ENCODE measurements at regions of chr6 and their contacts with region 1.

Region 1: GRCh38 chr6:17971128-17972073 is 16.0 kb downstream of the KIF13A start:
- DNase-seq: peak; percentile 66
- H3K4me3 ChIP-seq: no peak overlapping the region
- H3K27ac ChIP-seq: peak overlapping the region; percentile 44
- H3K4me1 ChIP-seq: peaks cover 50% of the 10 kb centered on the region
- H3K27me3 ChIP-seq: no peaks in the 10 kb centered on the region
- CTCF ChIP-seq: no peak

Region 2: GRCh38 chr6:18022398-18023231 is 51.2 kb after region 1 on chr6:
- CTCF ChIA-PET with region 1: no interaction called
- dilution Hi-C with region 1: loop called (anchors 10 kb)
- in situ Hi-C with region 1: no loop called
- intact Hi-C with region 1: no loop called
- DNase-seq: peak; percentile 58
- H3K4me3 ChIP-seq: peak overlapping the region in 2 of 3 experiments; percentile 7 to 16
- H3K27ac ChIP-seq: peak overlapping the region; percentile 71
- H3K4me1 ChIP-seq: peaks cover 37% of the 10 kb centered on the region
- H3K27me3 ChIP-seq: no peaks in the 10 kb centered on the region
- CTCF ChIP-seq: no peak

Measured in mammary epithelial cell (primary cell).